Activated CD8-positive, alpha-beta T cell treated with anti-CD3 and anti-CD28 coated beads, Interleukin-2, amount 10 ng/mL, durations not matched to agents 7 days and 5 days (primary cell): ENCODE measurements at regions of chr4 and their contacts with region 1.

Region 1: GRCh38 chr4:102500696-102501446 is at the start of gene NFKB1:
- DNase-seq: peak; percentile 81
- ATAC-seq: peak; percentile 68
- H3K4me3 Mint-ChIP-seq: peak within 1 kb of the TSS; percentile 88
- H3K27ac Mint-ChIP-seq: peak within 1 kb of the TSS; percentile 92
- H3K4me1 Mint-ChIP-seq: peaks cover 28% of the 10 kb centered on the region
- H3K27me3 Mint-ChIP-seq: no peaks in the 10 kb centered on the region
- total RNA-seq, gene NFKB1: 150 to 162 TPM

Region 2: DNA sequence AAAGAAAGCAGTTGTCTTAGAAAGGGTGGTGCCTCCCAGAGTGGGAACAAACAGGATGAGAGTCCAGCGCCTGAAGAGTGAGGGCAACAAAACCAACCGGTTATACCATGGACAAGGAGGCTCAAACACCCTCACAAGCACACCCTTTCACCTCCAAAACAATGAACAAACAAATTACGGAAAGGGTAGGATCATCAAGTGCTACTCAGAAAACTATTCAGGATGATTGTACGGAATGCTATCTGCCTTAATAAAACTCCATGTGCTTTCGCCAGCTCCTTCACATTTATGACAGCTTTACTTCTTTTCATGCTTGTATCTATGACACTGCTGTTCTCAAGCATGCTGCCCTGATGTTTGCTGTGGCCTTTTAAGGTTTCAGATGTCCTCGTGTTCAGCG is 182.3 kb before region 1 on chr4:
- CTCF ChIA-PET with region 1: no interaction called
- POLR2A ChIA-PET with region 1: no interaction called
- DNase-seq: no peak
- ATAC-seq: no peak
- H3K4me3 Mint-ChIP-seq: no peak overlapping the region
- H3K27ac Mint-ChIP-seq: no peak overlapping the region
- H3K4me1 Mint-ChIP-seq: peaks cover 24% of the 10 kb centered on the region
- H3K27me3 Mint-ChIP-seq: no peaks in the 10 kb centered on the region

Region 3: GRCh38 chr4:102449751-102450352 is 51.0 kb before region 1 on chr4:
- CTCF ChIA-PET with region 1: interaction called, 12 read pairs
- POLR2A ChIA-PET with region 1: interaction called, 7 read pairs
- DNase-seq: peak; percentile 81
- ATAC-seq: peak; percentile 70
- H3K4me3 Mint-ChIP-seq: no peak overlapping the region
- H3K27ac Mint-ChIP-seq: no peak overlapping the region
- H3K4me1 Mint-ChIP-seq: peaks cover 41% of the 10 kb centered on the region
- H3K27me3 Mint-ChIP-seq: peaks cover 2% of the 10 kb centered on the region

Region 4: GRCh38 chr4:102511830-102512605 is 11.1 kb after region 1 on chr4:
- CTCF ChIA-PET with region 1: interaction called, 4 read pairs
- POLR2A ChIA-PET with region 1: interaction called, 13 read pairs
- DNase-seq: no peak
- ATAC-seq: no peak
- H3K4me3 Mint-ChIP-seq: no peak overlapping the region
- H3K27ac Mint-ChIP-seq: no peak overlapping the region
- H3K4me1 Mint-ChIP-seq: peaks cover 58% of the 10 kb centered on the region
- H3K27me3 Mint-ChIP-seq: no peaks in the 10 kb centered on the region

Region 5: GRCh38 chr4:102518703-102519131 is 17.8 kb after region 1 on chr4:
- CTCF ChIA-PET with region 1: interaction called, 5 read pairs
- POLR2A ChIA-PET with region 1: interaction called, 21 read pairs
- DNase-seq: no peak
- ATAC-seq: peak; percentile 77
- H3K4me3 Mint-ChIP-seq: peak overlapping the region; percentile 22
- H3K27ac Mint-ChIP-seq: peak overlapping the region; percentile 81
- H3K4me1 Mint-ChIP-seq: peaks cover 78% of the 10 kb centered on the region
- H3K27me3 Mint-ChIP-seq: no peaks in the 10 kb centered on the region

Region 6: DNA sequence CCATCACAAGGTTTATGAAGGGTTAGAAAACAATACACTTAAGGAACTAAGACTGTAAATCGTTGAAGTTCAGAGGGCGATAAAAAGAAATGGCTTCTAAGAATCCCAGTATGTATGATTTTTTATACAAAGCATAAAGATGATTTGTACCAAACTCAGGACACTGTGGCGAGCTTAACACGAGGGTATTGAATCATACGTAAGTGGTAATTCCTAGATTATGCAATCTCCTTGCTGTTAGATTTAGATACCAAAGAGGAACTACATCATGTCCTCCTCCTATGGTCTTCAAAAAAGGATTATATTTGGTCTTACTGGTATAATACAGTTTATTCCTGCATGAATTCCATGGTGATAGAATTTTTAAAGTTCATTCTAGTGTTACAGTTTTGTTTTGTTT is 24.2 kb after region 1 on chr4:
- CTCF ChIA-PET with region 1: interaction called, 11 read pairs
- POLR2A ChIA-PET with region 1: interaction called, 21 read pairs
- DNase-seq: no peak
- ATAC-seq: no peak
- H3K4me3 Mint-ChIP-seq: no peak overlapping the region
- H3K27ac Mint-ChIP-seq: peak overlapping the region; percentile 74
- H3K4me1 Mint-ChIP-seq: peaks cover 92% of the 10 kb centered on the region
- H3K27me3 Mint-ChIP-seq: no peaks in the 10 kb centered on the region

Region 7: DNA sequence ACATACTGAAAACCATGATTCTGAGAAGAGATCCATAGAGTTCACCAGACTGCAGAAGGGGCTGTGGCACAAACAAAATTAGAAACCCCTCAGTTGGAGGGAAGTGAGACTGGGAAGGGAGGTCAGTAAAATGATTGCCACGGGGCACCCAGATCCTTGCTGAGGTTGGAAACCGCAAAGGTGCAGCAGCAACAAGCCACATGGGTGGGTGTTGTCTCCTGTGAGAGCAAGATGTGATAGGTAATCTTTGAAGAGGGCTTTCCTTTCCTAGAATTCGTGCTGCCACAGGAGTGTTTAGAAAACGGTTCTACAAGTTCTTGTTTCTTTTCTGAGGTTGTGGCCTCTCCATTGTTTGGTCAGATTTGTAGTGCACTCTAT is 85.8 kb after region 1 on chr4:
- CTCF ChIA-PET with region 1: no interaction called
- POLR2A ChIA-PET with region 1: interaction called, 12 read pairs
- DNase-seq: peak; percentile 86
- ATAC-seq: peak; percentile 84
- H3K4me3 Mint-ChIP-seq: peak overlapping the region; percentile 64
- H3K27ac Mint-ChIP-seq: peak overlapping the region; percentile 88
- H3K4me1 Mint-ChIP-seq: peaks cover 92% of the 10 kb centered on the region
- H3K27me3 Mint-ChIP-seq: no peaks in the 10 kb centered on the region

Region 8: GRCh38 chr4:102610007-102610406 is 109.1 kb after region 1 on chr4:
- CTCF ChIA-PET with region 1: interaction called, 5 read pairs
- POLR2A ChIA-PET with region 1: interaction called, 13 read pairs
- DNase-seq: no peak
- ATAC-seq: no peak
- H3K4me3 Mint-ChIP-seq: peak overlapping the region; percentile 13
- H3K27ac Mint-ChIP-seq: peak overlapping the region; percentile 63
- H3K4me1 Mint-ChIP-seq: peaks cover 92% of the 10 kb centered on the region
- H3K27me3 Mint-ChIP-seq: no peaks in the 10 kb centered on the region